ENCODE measurements at regions of chr21 and their contacts with region 1.

Region 1: DNA sequence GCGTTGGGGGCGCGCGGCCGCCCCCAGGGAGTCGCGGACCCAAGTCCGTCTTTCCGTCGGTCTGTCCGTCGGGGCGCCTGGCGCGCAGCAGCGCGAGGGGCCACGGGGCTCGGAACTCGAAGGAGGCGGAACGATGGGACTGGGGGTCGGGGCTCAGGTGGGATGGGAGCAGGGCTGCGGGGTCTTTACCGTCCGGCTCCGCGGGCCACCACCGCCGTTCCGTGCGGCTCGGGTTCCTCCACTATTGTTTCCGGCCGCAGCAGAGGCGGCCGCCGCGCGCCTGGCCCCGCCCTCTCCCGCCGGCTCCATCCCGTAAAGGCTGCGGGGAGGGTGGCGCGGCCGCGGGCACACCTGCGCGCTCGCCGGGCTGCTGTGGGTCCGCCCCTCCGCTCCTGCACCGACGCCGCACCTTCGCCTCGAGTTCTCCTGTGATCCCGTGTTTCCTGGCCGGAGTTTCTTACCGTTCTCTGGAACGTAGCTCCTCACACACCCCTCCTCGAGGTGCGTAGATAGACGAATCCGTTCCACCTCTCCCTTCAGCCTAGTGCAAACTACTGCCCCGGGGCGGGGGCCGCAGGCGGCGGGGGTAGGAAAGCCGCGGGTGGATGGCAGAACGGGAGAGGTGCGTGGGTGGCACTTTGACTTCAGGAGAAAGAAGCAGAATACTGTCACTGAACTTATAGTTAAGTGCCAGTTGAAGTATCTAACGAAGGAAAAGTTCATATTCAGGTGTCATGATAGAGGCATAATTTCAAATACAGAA is at the start of gene C21orf91:
- DNase-seq: peak; percentile 89 to 92
- H3K4me3 ChIP-seq: peak within 1 kb of the TSS; percentile 93
- H3K4me3 Mint-ChIP-seq: peak within 1 kb of the TSS; percentile 91
- H3K27ac Mint-ChIP-seq: peak within 1 kb of the TSS; percentile 100
- H3K4me1 ChIP-seq: no peaks in the 10 kb centered on the region; the same call in 1 of the 2 replicates
- H3K4me1 Mint-ChIP-seq: no peaks in the 10 kb centered on the region
- H3K27me3 ChIP-seq: no peaks in the 10 kb centered on the region
- H3K27me3 Mint-ChIP-seq: no peaks in the 10 kb centered on the region
- CTCF ChIP-seq: no peak
- total RNA-seq, gene C21orf91: 16.2 and 16.9 TPM in 2 replicates

Region 2: GRCh38 chr21:17726047-17726830 is 93.1 kb before region 1 on chr21:
- CTCF ChIA-PET with region 1: no interaction called
- POLR2A ChIA-PET with region 1: no interaction called
- intact Hi-C with region 1: loop called (anchors 5 kb)
- DNase-seq: peak in 1 of 2 experiments; percentile 24
- H3K4me3 ChIP-seq: no peak overlapping the region
- H3K4me3 Mint-ChIP-seq: no peak overlapping the region
- H3K27ac Mint-ChIP-seq: no peak overlapping the region
- H3K4me1 ChIP-seq: peaks cover 3% of the 10 kb centered on the region; the same call in 1 of the 2 replicates
- H3K4me1 Mint-ChIP-seq: no peaks in the 10 kb centered on the region
- H3K27me3 ChIP-seq: no peaks in the 10 kb centered on the region
- H3K27me3 Mint-ChIP-seq: no peaks in the 10 kb centered on the region
- CTCF ChIP-seq: peak; percentile 36 to 38

Region 3: DNA sequence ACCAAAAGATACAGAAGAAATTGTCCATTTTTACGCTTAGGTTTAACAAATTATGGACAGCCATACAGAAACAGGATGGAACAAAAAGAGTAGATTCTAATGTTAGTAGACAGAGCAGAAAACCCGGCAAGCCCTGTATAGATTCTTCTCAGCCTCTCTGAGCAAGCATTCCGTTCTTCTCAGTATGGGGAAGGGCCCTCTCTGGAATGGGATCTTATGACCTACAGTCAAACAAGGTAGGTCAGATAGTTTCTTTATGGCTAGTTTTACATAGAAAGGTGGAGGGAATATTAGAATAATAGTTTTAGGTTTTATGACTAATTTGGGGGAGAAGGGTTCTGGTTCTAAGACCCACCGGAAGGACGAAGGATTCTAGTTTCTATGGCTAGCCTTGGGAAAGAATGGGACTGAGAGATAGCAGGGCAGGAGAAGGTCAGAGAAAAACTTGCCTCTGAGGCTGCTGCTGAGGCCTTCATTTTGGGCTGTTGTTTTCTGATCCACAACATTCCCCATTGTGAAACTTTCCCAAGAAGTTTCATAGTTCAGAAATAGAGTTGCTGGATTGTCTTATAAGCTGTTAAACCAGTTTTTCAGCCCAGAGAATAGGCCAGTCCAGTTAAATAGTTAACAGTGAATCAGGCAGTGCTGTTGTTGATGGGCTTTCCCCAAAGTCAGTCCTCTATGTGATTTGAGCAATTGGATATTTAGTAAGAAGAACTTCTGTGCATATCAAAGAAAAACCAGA is 77.3 kb before region 1 on chr21:
- CTCF ChIA-PET with region 1: no interaction called
- POLR2A ChIA-PET with region 1: no interaction called
- intact Hi-C with region 1: loop called (anchors 1 kb)
- DNase-seq: peak in 1 of 2 experiments; percentile 40
- H3K4me3 ChIP-seq: no peak overlapping the region
- H3K4me3 Mint-ChIP-seq: peak overlapping the region; percentile 10
- H3K27ac Mint-ChIP-seq: peak overlapping the region; percentile 87
- H3K4me1 ChIP-seq: peaks cover 26% of the 10 kb centered on the region
- H3K4me1 Mint-ChIP-seq: peaks cover 32% of the 10 kb centered on the region
- H3K27me3 ChIP-seq: no peaks in the 10 kb centered on the region
- H3K27me3 Mint-ChIP-seq: no peaks in the 10 kb centered on the region
- CTCF ChIP-seq: no peak

Region 4: GRCh38 chr21:17795146-17796036 is 23.9 kb before region 1 on chr21:
- CTCF ChIA-PET with region 1: no interaction called
- POLR2A ChIA-PET with region 1: no interaction called
- intact Hi-C with region 1: loop called (anchors 1 kb)
- DNase-seq: no peak
- H3K4me3 ChIP-seq: no peak overlapping the region
- H3K4me3 Mint-ChIP-seq: peak overlapping the region; percentile 33
- H3K27ac Mint-ChIP-seq: no peak overlapping the region
- H3K4me1 ChIP-seq: peaks cover 10% of the 10 kb centered on the region
- H3K4me1 Mint-ChIP-seq: peaks cover 16% of the 10 kb centered on the region
- H3K27me3 ChIP-seq: no peaks in the 10 kb centered on the region
- H3K27me3 Mint-ChIP-seq: no peaks in the 10 kb centered on the region
- CTCF ChIP-seq: no peak

Region 5: DNA sequence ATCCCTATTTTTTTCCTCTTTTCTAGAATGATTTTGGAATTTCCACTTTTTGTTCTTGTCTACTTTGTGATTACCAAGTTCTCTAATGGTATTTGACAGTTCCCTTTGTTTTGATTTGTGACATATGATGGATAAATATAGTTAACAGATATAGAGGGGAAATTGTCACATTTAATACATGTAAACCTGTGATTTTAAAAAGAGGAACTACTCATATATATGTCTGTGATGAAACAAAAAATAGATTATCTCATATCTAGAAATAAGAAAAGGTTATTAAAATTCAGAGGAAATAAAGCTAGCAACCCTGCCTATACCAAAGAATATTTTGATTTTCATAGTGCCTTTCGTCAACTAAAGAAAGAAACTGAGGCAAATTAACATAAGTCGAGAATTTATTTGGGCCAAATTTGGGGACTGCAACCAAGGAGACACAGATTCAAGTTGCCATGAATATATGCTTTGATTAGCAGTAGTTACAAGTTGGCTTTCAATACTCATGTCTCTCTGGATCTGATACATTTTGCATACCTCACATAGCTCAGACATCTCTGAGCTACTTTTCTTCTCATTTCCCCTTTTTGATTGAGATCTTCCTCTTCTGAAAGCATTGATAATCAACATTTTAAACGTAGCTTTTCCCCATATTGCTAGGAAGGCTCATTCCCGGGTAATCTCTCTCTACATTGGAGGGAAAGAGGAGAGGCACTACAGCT is 15.5 kb after region 1 on chr21:
- CTCF ChIA-PET with region 1: no interaction called
- POLR2A ChIA-PET with region 1: no interaction called
- intact Hi-C with region 1: no loop called
- DNase-seq: no peak
- H3K4me3 ChIP-seq: no peak overlapping the region
- H3K4me3 Mint-ChIP-seq: no peak overlapping the region
- H3K27ac Mint-ChIP-seq: no peak overlapping the region
- H3K4me1 ChIP-seq: no peaks in the 10 kb centered on the region
- H3K4me1 Mint-ChIP-seq: no peaks in the 10 kb centered on the region
- H3K27me3 ChIP-seq: no peaks in the 10 kb centered on the region
- H3K27me3 Mint-ChIP-seq: peaks cover 6% of the 10 kb centered on the region
- CTCF ChIP-seq: no peak